AG04449 (cell line): ENCODE measurements at regions of chr2 and their contacts with region 1.

Region 1: DNA sequence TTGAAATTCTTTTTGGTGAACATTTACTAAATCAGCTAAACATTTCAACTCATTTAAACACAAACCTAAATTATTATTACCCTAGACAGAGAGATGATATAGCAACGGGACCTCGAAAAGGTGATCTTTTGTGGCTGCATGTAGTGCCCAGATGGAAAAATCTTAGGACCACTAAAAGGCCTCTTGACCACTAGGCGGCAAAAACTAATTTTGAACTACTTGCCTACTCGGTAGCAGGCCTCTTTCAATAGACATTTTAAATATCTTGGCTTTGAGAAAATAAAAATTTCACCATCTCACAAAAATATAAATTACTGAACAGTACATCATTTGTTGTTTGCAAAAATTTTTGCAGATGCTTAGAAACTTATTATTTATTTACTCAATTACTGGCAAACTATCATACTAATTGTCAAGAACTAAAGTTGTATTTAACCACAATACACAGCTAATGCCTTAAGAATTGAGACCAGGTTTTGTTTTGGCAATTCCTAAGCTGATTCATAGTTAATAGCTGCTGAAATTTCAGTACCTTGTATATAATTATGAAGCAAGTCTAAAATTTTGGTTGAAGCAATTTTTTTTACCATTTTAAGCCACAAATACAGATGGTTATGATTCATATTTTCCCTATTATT is 9.4 kb downstream of the COL3A1 start:
- DNase-seq: no peak
- H3K4me3 ChIP-seq: no peak overlapping the region
- CTCF ChIP-seq: peak; percentile 43

Region 2: GRCh38 chr2:188524519-188525113 is 458.9 kb before region 1 on chr2:
- CTCF ChIA-PET with region 1: interaction called, 138 read pairs
- POLR2A ChIA-PET with region 1: interaction called, 4 read pairs
- DNase-seq: peak; percentile 17
- H3K4me3 ChIP-seq: no peak overlapping the region
- CTCF ChIP-seq: peak; percentile 42

Region 3: DNA sequence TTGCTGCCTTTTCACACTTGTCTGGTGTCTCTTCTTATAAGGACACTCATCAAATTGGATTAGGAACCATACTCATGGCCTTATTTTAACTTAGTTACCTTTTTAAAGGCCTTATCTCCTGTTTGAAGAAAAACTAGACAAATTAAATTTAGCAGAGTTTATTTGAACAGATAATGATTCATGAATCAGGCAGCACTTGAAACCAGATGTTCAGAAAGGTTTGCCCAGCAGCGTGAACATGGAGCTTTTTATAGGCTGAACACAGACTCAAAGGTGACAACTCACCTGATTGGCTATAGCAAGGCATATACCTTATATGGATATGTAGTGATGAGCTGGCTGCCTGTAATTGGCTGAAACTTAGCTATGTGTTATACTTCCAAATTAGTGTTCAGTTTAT is 453.8 kb before region 1 on chr2:
- CTCF ChIA-PET with region 1: interaction called, 138 read pairs
- POLR2A ChIA-PET with region 1: interaction called, 4 read pairs
- DNase-seq: no peak
- H3K4me3 ChIP-seq: no peak overlapping the region
- CTCF ChIP-seq: no peak

Region 4: GRCh38 chr2:188788621-188789020 is 194.9 kb before region 1 on chr2:
- CTCF ChIA-PET with region 1: interaction called, 29 read pairs
- POLR2A ChIA-PET with region 1: interaction called, 7 read pairs
- DNase-seq: no peak
- H3K4me3 ChIP-seq: no peak overlapping the region
- CTCF ChIP-seq: no peak

Region 5: DNA sequence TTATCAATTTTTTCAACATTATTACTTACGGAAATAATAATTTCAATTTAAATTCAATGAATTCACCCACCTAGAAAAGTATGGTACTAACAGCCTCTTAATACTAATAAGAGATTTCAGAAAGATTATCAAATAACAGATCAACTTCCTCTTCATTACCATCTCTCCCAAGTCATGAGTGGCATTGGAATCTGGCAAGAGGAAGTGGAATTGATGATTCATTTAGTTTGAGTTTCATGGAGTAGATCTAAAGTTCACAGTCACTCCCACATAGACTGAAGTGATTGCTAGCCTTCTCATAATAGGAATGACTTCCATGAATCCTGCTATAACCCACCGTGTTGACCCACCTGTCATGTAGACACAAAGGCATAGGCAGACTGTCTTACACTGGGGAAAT is 380.0 kb after region 1 on chr2:
- CTCF ChIA-PET with region 1: no interaction called
- POLR2A ChIA-PET with region 1: no interaction called
- DNase-seq: no peak
- H3K4me3 ChIP-seq: no peak overlapping the region
- CTCF ChIP-seq: no peak

Region 6: GRCh38 chr2:189412330-189412953 is 428.9 kb after region 1 on chr2:
- CTCF ChIA-PET with region 1: interaction called, 11 read pairs
- POLR2A ChIA-PET with region 1: no interaction called
- DNase-seq: no peak
- H3K4me3 ChIP-seq: no peak overlapping the region
- CTCF ChIP-seq: peak; percentile 43